Activated CD4-positive, alpha-beta T cell treated with anti-CD3 and anti-CD28 coated beads, Interleukin-2, amount 10 ng/mL, durations not matched to agents 7 days and 5 days (primary cell): ENCODE measurements at regions of chr10 and their contacts with region 1.

Region 1: DNA sequence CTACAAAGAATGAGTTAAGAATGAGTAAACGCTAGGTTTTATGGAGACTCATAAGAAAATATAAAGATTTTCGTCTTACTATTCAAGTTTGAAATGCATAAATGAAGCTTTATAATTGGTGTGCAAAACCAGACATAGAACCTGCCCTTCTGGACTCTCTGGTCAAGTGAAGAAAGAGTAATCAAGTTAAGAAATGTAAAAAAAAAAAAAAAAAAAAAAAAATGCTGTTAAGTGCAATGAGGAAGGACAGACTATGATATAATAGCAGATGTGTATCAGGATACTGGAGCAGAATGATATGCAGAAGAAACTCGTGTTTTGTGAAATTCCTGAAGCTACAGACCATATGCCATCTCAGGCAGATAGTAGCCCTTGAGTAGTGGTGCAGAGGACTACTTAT is 5.6 kb downstream of the PCGF5 start:
- DNase-seq: no peak
- H3K4me3 Mint-ChIP-seq: no peak overlapping the region
- H3K27ac Mint-ChIP-seq: no peak overlapping the region
- H3K4me1 Mint-ChIP-seq: peaks cover 67% of the 10 kb centered on the region
- H3K27me3 Mint-ChIP-seq: no peaks in the 10 kb centered on the region

Region 2: DNA sequence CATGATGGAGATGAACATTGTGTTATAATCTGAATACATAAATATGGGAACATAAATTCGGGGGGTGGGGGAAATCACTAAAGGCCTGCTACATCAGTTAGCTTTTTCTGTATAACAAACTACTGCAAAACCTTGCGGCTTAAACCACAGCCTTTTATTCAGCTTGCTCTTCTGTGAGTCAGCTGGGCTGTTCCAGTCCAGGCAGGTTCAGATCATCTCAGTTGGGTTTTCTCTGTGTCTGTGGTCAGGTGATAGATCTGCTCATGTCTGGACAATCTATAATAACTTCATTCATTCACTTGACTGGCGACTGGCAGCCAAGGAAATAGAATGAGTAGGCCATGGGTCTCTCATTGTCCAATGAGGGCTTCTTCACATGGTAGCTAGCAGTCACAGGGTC is 391.8 kb before region 1 on chr10:
- CTCF ChIA-PET with region 1: no interaction called
- POLR2A ChIA-PET with region 1: no interaction called
- DNase-seq: no peak
- H3K4me3 Mint-ChIP-seq: no peak overlapping the region
- H3K27ac Mint-ChIP-seq: no peak overlapping the region
- H3K4me1 Mint-ChIP-seq: no peaks in the 10 kb centered on the region
- H3K27me3 Mint-ChIP-seq: peaks cover 8% of the 10 kb centered on the region

Region 3: GRCh38 chr10:91238191-91238590 is 12.1 kb after region 1 on chr10:
- CTCF ChIA-PET with region 1: interaction called, 13 read pairs
- POLR2A ChIA-PET with region 1: no interaction called
- DNase-seq: no peak
- H3K4me3 Mint-ChIP-seq: no peak overlapping the region
- H3K27ac Mint-ChIP-seq: peak overlapping the region; percentile 46
- H3K4me1 Mint-ChIP-seq: peaks cover 20% of the 10 kb centered on the region
- H3K27me3 Mint-ChIP-seq: no peaks in the 10 kb centered on the region

Region 4: DNA sequence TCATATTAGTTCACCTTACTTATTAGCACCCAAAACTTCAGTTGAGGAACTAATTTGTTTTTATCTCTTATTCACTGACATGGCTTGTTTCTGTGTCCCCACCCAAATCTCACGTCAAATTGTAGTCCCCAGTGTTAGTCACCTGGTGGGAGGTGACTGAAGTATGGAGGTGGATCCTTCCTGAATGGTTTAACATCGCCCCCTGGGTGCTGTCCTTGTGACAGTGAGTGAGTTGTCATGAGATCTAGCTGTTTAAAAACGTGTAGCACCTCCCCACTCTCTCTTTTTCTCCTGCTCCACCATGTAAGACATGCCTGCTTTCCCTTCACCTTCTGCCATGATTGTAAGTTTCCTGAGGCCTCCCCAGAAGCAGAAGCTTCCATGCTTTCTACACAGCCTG is 109.1 kb after region 1 on chr10:
- CTCF ChIA-PET with region 1: no interaction called
- POLR2A ChIA-PET with region 1: no interaction called
- DNase-seq: no peak
- H3K4me3 Mint-ChIP-seq: no peak overlapping the region
- H3K27ac Mint-ChIP-seq: no peak overlapping the region
- H3K4me1 Mint-ChIP-seq: no peaks in the 10 kb centered on the region
- H3K27me3 Mint-ChIP-seq: peaks cover 1% of the 10 kb centered on the region

Region 5: DNA sequence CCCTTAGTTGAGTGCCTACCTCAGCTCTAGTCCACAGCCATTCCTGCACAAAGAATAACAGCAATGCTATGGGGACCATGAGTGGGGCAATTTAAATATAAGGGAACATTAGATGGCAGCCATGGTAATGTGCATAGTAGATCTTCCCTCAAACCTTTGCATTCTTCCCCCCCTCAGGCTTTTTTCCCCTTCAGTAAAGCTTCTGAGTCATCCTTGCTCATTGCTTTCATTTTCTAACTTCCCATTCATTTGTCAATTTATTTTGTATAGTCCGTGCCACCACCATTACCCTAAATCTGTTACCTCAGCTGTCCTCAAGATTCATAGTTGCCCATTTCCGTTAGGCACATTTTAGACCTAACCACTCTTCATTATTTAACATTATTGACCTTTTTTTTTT is 194.8 kb after region 1 on chr10:
- CTCF ChIA-PET with region 1: no interaction called
- POLR2A ChIA-PET with region 1: no interaction called
- DNase-seq: no peak
- H3K4me3 Mint-ChIP-seq: no peak overlapping the region
- H3K27ac Mint-ChIP-seq: no peak overlapping the region
- H3K4me1 Mint-ChIP-seq: peaks cover 9% of the 10 kb centered on the region
- H3K27me3 Mint-ChIP-seq: no peaks in the 10 kb centered on the region

Region 6: DNA sequence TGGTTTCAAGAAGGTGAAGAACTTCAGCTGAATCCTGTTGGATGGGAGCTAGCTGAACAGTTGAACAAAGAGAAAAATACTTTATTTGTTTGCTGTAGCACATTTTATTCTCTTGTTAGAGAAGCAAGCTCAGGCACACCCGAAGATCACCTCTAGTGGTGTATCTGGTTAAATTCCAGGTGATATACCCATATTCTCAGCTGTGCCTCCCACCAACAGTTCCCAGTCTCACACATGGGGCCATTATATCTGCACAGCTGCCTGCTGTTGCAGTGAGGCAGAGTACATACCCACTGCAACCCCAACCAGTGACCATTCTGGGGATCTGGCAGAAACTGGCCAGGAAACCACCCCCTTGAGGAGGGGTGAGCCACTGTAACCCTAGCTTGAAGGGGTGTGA is 706.6 kb after region 1 on chr10:
- CTCF ChIA-PET with region 1: no interaction called
- POLR2A ChIA-PET with region 1: no interaction called
- DNase-seq: no peak
- H3K4me3 Mint-ChIP-seq: no peak overlapping the region
- H3K27ac Mint-ChIP-seq: no peak overlapping the region
- H3K4me1 Mint-ChIP-seq: peaks cover 29% of the 10 kb centered on the region
- H3K27me3 Mint-ChIP-seq: no peaks in the 10 kb centered on the region